HepG2 (cell line): ENCODE measurements at regions of chr15 and their contacts with region 1.

Region 1: GRCh38 chr15:80072285-80072994 is 13.0 kb downstream of the ZFAND6 start:
- DNase-seq: peak; percentile 91
- ATAC-seq: peak; percentile 93
- H3K4me3 ChIP-seq: peak overlapping the region; percentile 63 to 76 (median 68); a peak in 5 of 6 replicates
- H3K27ac ChIP-seq: peak overlapping the region; percentile 43
- H3K4me1 ChIP-seq: peaks cover 84% of the 10 kb centered on the region
- H3K27me3 ChIP-seq: no peaks in the 10 kb centered on the region
- CTCF ChIP-seq: no peak
- EP300 ChIP-seq: 0 out of 4 replicates have a peak, but pooled peaks of 1 of the 2 experiments have one; percentile 9
- POLR2A ChIP-seq: no peak
- RAD21 ChIP-seq: no peak

Region 2: GRCh38 chr15:79943820-79944219 is 128.6 kb before region 1 on chr15:
- CTCF ChIA-PET with region 1: no interaction called
- POLR2A ChIA-PET with region 1: no interaction called
- in situ Hi-C with region 1: no loop called
- intact Hi-C with region 1: no loop called
- DNase-seq: no peak
- ATAC-seq: no peak
- H3K4me3 ChIP-seq: no peak overlapping the region
- H3K27ac ChIP-seq: no peak overlapping the region
- H3K4me1 ChIP-seq: peaks cover 30% of the 10 kb centered on the region
- H3K27me3 ChIP-seq: no peaks in the 10 kb centered on the region
- CTCF ChIP-seq: no peak
- EP300 ChIP-seq: no peak
- POLR2A ChIP-seq: no peak
- RAD21 ChIP-seq: no peak

Region 3: DNA sequence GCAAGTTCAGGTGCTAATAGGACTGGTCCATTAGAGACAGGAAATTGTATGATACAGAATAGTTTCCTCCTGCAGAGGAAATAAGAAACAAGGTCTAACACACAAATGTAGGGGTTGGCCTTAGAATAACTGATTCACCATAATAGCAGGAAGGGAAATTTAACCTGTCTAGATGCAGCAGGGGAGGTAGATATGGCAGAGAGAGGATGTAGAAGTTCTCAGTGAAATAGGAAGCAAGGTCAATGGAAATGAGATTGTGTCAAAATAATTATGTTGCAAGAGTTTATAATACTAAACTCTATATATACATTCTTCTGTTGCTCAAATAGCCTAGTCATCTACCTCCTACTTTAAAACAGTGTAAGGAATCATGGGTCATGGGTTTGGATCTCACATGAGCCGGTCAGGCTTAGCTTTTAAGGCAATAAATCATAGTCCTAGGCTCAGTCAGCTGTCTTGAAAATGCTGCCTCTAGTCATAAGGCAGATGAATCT is 118.4 kb before region 1 on chr15:
- CTCF ChIA-PET with region 1: no interaction called
- POLR2A ChIA-PET with region 1: no interaction called
- in situ Hi-C with region 1: no loop called
- intact Hi-C with region 1: no loop called
- DNase-seq: no peak
- ATAC-seq: no peak
- H3K4me3 ChIP-seq: no peak overlapping the region
- H3K27ac ChIP-seq: no peak overlapping the region
- H3K4me1 ChIP-seq: peaks cover 30% of the 10 kb centered on the region
- H3K27me3 ChIP-seq: no peaks in the 10 kb centered on the region
- CTCF ChIP-seq: no peak
- EP300 ChIP-seq: no peak
- POLR2A ChIP-seq: no peak
- RAD21 ChIP-seq: no peak

Region 4: GRCh38 chr15:80058851-80059785 is 13.3 kb before region 1 on chr15 and contains the start of gene ZFAND6:
- CTCF ChIA-PET with region 1: no interaction called
- POLR2A ChIA-PET with region 1: interaction called, 17 read pairs
- in situ Hi-C with region 1: no loop called
- intact Hi-C with region 1: no loop called
- DNase-seq: peak; percentile 89
- ATAC-seq: peak; percentile 93
- H3K4me3 ChIP-seq: peak within 1 kb of the TSS; percentile 69 to 97 (median 77)
- H3K27ac ChIP-seq: peak within 1 kb of the TSS; percentile 94
- H3K4me1 ChIP-seq: peaks cover 37% of the 10 kb centered on the region
- H3K27me3 ChIP-seq: no peaks in the 10 kb centered on the region
- CTCF ChIP-seq: no peak; the same call in none of the 2 replicates
- EP300 ChIP-seq: no peak
- POLR2A ChIP-seq: peak; percentile 83 to 97
- RAD21 ChIP-seq: no peak
- total RNA-seq, gene ZFAND6: 84.2 and 116 TPM in 2 replicates

Region 5: DNA sequence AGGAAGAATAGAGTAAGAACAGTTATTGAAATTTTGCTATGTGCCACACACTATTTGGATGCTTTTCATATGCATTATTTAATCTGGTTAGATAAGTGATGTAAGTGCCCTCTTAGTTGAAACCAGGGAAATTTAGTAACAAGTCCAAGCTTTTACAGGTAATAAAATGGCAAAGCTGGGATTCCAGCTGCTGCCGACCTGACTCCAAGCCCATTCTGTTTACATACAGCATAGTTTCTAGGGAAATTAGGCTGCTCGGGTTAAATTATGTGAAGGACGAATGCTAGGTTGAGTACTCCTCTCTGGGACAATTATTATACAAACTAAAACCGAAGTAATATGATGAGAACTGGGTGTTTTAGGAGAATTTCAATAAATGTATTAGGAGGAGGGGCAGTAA is 41.7 kb after region 1 on chr15:
- CTCF ChIA-PET with region 1: no interaction called
- POLR2A ChIA-PET with region 1: no interaction called
- in situ Hi-C with region 1: no loop called
- intact Hi-C with region 1: no loop called
- DNase-seq: no peak
- ATAC-seq: no peak
- H3K4me3 ChIP-seq: no peak overlapping the region
- H3K27ac ChIP-seq: no peak overlapping the region
- H3K4me1 ChIP-seq: peaks cover 26% of the 10 kb centered on the region
- H3K27me3 ChIP-seq: no peaks in the 10 kb centered on the region
- CTCF ChIP-seq: no peak
- EP300 ChIP-seq: no peak
- POLR2A ChIP-seq: no peak
- RAD21 ChIP-seq: no peak

Region 6: DNA sequence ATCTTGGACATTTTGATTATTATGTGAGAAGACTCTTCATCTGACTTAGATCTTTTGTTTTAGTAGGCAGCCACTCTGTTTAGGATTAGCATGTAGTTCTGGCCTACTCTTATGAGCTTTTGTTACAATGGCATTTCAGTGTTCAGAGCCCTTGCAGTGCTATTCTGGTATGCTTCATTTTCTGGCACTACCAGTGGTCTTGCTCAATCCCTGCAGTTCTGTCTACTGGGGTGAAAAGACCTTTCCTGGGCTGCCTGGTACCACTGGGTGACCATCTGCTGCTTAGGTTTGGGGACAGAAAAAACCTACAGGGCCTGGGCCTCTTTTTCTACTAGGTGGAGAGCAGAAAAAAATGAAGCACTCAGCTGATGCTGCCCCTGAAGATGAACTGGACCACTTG is 1166.8 kb after region 1 on chr15:
- CTCF ChIA-PET with region 1: no interaction called
- POLR2A ChIA-PET with region 1: no interaction called
- in situ Hi-C with region 1: no loop called
- intact Hi-C with region 1: no loop called
- DNase-seq: no peak
- ATAC-seq: no peak
- H3K4me3 ChIP-seq: no peak overlapping the region
- H3K27ac ChIP-seq: no peak overlapping the region
- H3K4me1 ChIP-seq: no peaks in the 10 kb centered on the region
- H3K27me3 ChIP-seq: no peaks in the 10 kb centered on the region
- CTCF ChIP-seq: no peak
- EP300 ChIP-seq: no peak
- POLR2A ChIP-seq: no peak
- RAD21 ChIP-seq: no peak